Dendritic cell treated with granulocyte-macrophage colony-stimulating factor and Interleukin-4, amounts not matched to agents 40 ng/mL and 50 ng/mL, for 4 days (primary cell): ENCODE measurements at regions of chr4 and their contacts with region 1.

Region 1: GRCh38 chr4:121096629-121097028 is 24.3 kb upstream of the NDNF start:
- H3K4me3 Mint-ChIP-seq: no peak overlapping the region
- H3K27ac Mint-ChIP-seq: no peak overlapping the region
- H3K4me1 Mint-ChIP-seq: no peaks in the 10 kb centered on the region
- H3K27me3 Mint-ChIP-seq: peaks cover 2% of the 10 kb centered on the region

Region 2: GRCh38 chr4:120071192-120071795 is 1025.3 kb before region 1 on chr4:
- intact Hi-C with region 1: loop called (anchors 5 kb)
- H3K4me3 Mint-ChIP-seq: no peak overlapping the region
- H3K27ac Mint-ChIP-seq: no peak overlapping the region
- H3K4me1 Mint-ChIP-seq: peaks cover 13% of the 10 kb centered on the region
- H3K27me3 Mint-ChIP-seq: no peaks in the 10 kb centered on the region

Region 3: GRCh38 chr4:120156120-120156718 is 940.4 kb before region 1 on chr4:
- intact Hi-C with region 1: loop called (anchors 1 kb)
- H3K4me3 Mint-ChIP-seq: no peak overlapping the region
- H3K27ac Mint-ChIP-seq: no peak overlapping the region
- H3K4me1 Mint-ChIP-seq: no peaks in the 10 kb centered on the region
- H3K27me3 Mint-ChIP-seq: peaks cover under 1% of the 10 kb centered on the region

Region 4: DNA sequence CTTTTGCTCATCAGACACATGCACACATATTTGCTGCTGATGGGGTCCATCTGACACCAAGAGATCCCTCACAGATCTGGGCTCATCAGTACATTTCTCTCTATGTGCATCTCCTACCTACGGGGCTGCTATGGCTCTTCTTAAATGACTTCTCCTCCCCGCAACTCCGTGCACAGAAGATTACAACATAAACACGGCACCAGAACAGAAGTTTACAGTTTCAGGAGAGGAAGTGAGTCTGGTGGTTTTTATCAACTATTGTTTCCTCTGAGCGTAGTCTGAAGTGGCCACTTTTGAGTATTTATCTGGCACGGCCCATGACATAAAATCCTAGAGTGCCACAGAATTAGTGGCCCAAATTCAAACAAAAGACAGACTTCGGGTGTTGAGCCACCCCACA is 437.9 kb before region 1 on chr4:
- intact Hi-C with region 1: no loop called
- H3K4me3 Mint-ChIP-seq: no peak overlapping the region
- H3K27ac Mint-ChIP-seq: no peak overlapping the region
- H3K4me1 Mint-ChIP-seq: peaks cover 13% of the 10 kb centered on the region
- H3K27me3 Mint-ChIP-seq: no peaks in the 10 kb centered on the region

Region 5: DNA sequence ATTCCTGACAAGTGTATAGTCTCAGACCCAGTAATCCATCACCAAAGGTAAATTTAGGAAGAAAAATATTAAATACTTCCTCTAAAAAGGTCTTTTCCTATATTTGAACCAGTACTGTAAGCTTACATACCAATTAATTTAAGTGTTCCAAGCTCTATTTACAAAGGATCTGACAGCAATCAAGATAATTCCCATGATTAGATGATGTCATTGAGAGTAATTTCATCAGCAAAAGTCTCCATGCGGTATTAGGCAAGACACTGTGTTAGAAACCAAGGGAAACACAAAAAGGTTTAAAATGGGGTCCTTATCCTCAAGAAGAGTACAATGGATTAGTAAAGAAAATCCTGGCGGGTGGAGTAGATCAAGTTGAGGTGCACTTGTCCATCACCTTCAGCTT is 372.6 kb before region 1 on chr4:
- intact Hi-C with region 1: loop called (anchors 5 kb)
- H3K4me3 Mint-ChIP-seq: no peak overlapping the region
- H3K27ac Mint-ChIP-seq: no peak overlapping the region
- H3K4me1 Mint-ChIP-seq: no peaks in the 10 kb centered on the region
- H3K27me3 Mint-ChIP-seq: no peaks in the 10 kb centered on the region